ENCODE measurements at regions of chr1 and their contacts with region 1.

Region 1: DNA sequence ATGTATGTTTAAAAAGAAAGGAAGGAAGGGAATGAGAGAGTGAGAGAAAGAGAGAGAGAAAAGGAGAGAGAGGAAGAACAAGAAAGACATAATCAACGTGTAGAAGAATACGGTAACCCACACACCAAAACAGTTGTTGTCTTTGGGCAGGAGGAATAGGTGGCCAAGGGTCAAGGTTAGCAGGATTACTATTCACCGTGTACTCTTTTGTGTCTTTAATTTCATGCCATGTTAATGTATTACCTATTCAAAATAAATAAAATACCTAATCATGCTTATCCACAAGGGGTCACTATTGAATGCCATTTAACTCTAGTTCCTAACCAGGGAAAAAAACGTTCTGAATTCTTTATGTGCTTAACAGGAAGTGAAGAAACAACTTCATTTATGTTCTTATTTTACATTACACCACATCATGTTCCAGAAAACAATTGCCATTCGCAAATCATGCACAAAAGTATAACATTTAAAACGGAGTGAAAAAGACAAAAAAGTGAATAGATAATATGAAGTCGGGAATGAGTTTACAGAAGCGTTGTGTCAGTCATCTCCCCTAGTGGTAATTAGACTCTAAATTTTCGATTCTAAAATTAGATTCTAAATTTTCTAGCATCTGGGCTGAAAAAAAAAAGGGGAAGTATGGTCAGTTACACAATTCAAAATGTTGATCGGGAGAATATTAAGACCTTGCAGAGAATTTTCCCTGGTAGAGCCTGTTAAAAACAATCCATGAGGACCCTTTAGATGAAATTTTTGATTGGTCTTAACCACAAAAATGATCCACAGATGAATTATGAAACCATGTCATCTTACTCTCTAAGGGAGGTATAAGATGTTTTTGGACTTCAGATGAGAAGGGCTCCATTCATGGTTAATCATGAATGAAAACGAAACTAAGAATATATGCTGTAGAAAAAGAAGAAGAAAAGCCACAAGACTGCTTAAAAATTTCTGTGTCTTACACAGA is 700 bp upstream of the KMO start:
- DNase-seq: peak; percentile 63
- ATAC-seq: peak; percentile 92
- H3K4me3 ChIP-seq: peak overlapping the region; percentile 44 to 55
- H3K27ac ChIP-seq: no peak overlapping the region
- H3K4me1 ChIP-seq: peaks cover 0 to 8% of the 10 kb centered on the region in 2 experiments; a peak in 1 of 4 replicates
- H3K27me3 ChIP-seq: no peaks in the 10 kb centered on the region
- CTCF ChIP-seq: peak; percentile 32 to 89 (median 71); a peak in 4 of 6 replicates
- POLR2A ChIP-seq: no peak
- RAD21 ChIP-seq: peak; percentile 85

Region 2: GRCh38 chr1:241627453-241628259 is 96.2 kb after region 1 on chr1:
- CTCF ChIA-PET with region 1: no interaction called
- POLR2A ChIA-PET with region 1: no interaction called
- RAD21 ChIA-PET with region 1: no interaction called
- intact Hi-C with region 1: loop called (anchors 1 kb)
- DNase-seq: peak; percentile 47
- ATAC-seq: peak; percentile 74
- H3K4me3 ChIP-seq: no peak overlapping the region
- H3K27ac ChIP-seq: no peak overlapping the region
- H3K4me1 ChIP-seq: no peaks in the 10 kb centered on the region
- H3K27me3 ChIP-seq: no peaks in the 10 kb centered on the region
- CTCF ChIP-seq: peak; percentile 49 to 62 (median 57); a peak in 5 of 6 replicates
- POLR2A ChIP-seq: no peak
- RAD21 ChIP-seq: peak; percentile 66

Region 3: GRCh38 chr1:241834733-241835377 is 303.4 kb after region 1 on chr1:
- CTCF ChIA-PET with region 1: no interaction called
- POLR2A ChIA-PET with region 1: no interaction called
- RAD21 ChIA-PET with region 1: no interaction called
- intact Hi-C with region 1: loop called (anchors 2 kb)
- DNase-seq: peak; percentile 26
- ATAC-seq: peak; percentile 67
- H3K4me3 ChIP-seq: no peak overlapping the region
- H3K27ac ChIP-seq: no peak overlapping the region
- H3K4me1 ChIP-seq: no peaks in the 10 kb centered on the region
- H3K27me3 ChIP-seq: no peaks in the 10 kb centered on the region
- CTCF ChIP-seq: peak; percentile 63 to 70 (median 66); a peak in 5 of 6 replicates
- POLR2A ChIP-seq: no peak
- RAD21 ChIP-seq: peak; percentile 79

Region 4: GRCh38 chr1:241998412-241998921 is 467.0 kb after region 1 on chr1:
- CTCF ChIA-PET with region 1: interaction called, 3 read pairs
- POLR2A ChIA-PET with region 1: no interaction called
- RAD21 ChIA-PET with region 1: no interaction called
- intact Hi-C with region 1: loop called (anchors 5 kb)
- DNase-seq: peak; percentile 89
- ATAC-seq: peak; percentile 97
- H3K4me3 ChIP-seq: peak overlapping the region; percentile 25 to 43; a peak in 3 of 4 replicates
- H3K27ac ChIP-seq: peak overlapping the region; percentile 1; the same call in 1 of the 2 replicates
- H3K4me1 ChIP-seq: peaks cover 0 to 10% of the 10 kb centered on the region in 2 experiments; a peak in 3 of 4 replicates
- H3K27me3 ChIP-seq: no peaks in the 10 kb centered on the region
- CTCF ChIP-seq: peak; percentile 80 to 98 (median 96)
- POLR2A ChIP-seq: no peak
- RAD21 ChIP-seq: peak; percentile 55

Region 5: GRCh38 chr1:242017584-242018233 is 486.2 kb after region 1 on chr1:
- CTCF ChIA-PET with region 1: no interaction called
- POLR2A ChIA-PET with region 1: no interaction called
- RAD21 ChIA-PET with region 1: no interaction called
- intact Hi-C with region 1: loop called (anchors 1 kb)
- DNase-seq: peak; percentile 41
- ATAC-seq: peak; percentile 83
- H3K4me3 ChIP-seq: no peak overlapping the region
- H3K27ac ChIP-seq: no peak overlapping the region
- H3K4me1 ChIP-seq: no peaks in the 10 kb centered on the region
- H3K27me3 ChIP-seq: no peaks in the 10 kb centered on the region
- CTCF ChIP-seq: peak; percentile 65 to 85 (median 76)
- POLR2A ChIP-seq: no peak
- RAD21 ChIP-seq: peak; percentile 75